ENCODE measurements at regions of chr11 and their contacts with region 1.

Region 1: GRCh38 chr11:130827451-130828377 is 88.6 kb downstream of the SNX19 start:
- H3K4me3 ChIP-seq: no peak overlapping the region
- H3K27ac ChIP-seq: no peak overlapping the region
- H3K4me1 ChIP-seq: no peaks in the 10 kb centered on the region
- CTCF ChIP-seq: peak; percentile 42; the same call in 1 of the 2 replicates

Region 2: GRCh38 chr11:130636722-130637517 is 190.8 kb before region 1 on chr11:
- CTCF ChIA-PET with region 1: interaction called, 13 read pairs
- POLR2A ChIA-PET with region 1: no interaction called
- H3K4me3 ChIP-seq: no peak overlapping the region
- H3K27ac ChIP-seq: no peak overlapping the region
- H3K4me1 ChIP-seq: no peaks in the 10 kb centered on the region
- CTCF ChIP-seq: no peak

Region 3: DNA sequence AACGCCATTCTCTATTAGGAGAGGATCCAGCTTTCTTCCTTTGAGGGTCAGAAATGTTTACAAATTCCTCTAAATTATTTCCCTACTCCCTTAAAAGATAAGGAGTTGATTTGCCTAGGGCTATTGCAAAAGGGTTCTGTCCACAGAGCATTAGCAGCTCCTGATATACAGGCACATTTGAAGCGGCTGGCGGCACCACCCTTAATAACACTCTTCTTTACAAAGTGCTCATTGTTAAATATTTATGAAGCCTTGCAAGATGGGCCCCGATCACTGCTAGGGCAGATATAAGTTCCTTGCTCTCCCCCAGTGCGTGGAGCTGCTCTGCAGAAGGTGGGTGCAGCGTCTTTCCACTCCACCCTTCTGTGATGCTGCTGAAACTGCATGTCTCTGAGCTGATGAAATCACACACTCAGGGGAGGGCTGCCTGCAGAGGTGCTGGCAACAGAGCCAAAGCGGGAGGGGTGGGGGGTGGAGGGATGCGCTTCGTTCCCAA is 426.0 kb after region 1 on chr11:
- CTCF ChIA-PET with region 1: no interaction called
- POLR2A ChIA-PET with region 1: no interaction called
- H3K4me3 ChIP-seq: no peak overlapping the region
- H3K27ac ChIP-seq: no peak overlapping the region
- H3K4me1 ChIP-seq: no peaks in the 10 kb centered on the region; the same call in 1 of the 2 replicates
- CTCF ChIP-seq: no peak

Region 4: DNA sequence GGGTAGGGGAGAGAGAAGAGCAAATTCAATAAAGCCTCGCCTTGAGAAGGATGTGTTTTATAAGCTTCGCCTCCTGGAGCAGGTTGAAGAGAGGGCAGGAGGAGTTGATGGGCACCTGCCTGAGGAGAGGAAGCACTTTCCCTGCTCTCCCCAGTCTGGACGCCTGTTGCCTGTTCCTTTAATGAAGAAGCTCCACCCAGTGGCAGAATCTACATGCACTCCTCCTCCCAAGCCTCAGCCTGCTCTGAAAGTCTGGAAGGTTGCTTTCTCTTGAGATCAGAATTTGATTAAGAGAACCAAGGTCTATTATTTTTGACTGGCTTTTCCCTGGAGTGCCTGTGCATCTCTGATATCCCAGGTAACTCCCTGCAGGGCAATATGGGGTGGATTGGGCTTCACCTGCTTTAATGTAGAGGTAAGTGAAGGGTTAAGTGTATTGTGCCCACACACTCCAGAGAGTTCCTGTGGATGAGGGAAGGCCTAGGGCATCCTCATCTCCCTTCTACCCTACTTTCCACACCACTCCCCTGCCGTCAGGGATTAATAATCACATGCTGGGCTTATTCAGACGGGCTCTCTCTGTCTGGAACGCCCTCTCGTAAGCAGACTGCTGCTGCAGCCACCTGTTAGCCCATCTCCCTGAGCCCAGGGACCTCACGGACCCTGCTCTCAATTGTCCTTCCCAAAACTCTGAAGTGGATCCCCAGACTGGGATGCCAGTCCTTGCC is 565.0 kb after region 1 on chr11:
- CTCF ChIA-PET with region 1: no interaction called
- POLR2A ChIA-PET with region 1: no interaction called
- H3K4me3 ChIP-seq: no peak overlapping the region
- H3K27ac ChIP-seq: no peak overlapping the region
- H3K4me1 ChIP-seq: no peaks in the 10 kb centered on the region
- CTCF ChIP-seq: no peak

Measured in HEK293 (cell line).